Activated B cell treated with CpG ODN at 0.5 μM for 24 hours (primary cell): ENCODE measurements at regions of chr7 and their contacts with region 1.

Region 1: DNA sequence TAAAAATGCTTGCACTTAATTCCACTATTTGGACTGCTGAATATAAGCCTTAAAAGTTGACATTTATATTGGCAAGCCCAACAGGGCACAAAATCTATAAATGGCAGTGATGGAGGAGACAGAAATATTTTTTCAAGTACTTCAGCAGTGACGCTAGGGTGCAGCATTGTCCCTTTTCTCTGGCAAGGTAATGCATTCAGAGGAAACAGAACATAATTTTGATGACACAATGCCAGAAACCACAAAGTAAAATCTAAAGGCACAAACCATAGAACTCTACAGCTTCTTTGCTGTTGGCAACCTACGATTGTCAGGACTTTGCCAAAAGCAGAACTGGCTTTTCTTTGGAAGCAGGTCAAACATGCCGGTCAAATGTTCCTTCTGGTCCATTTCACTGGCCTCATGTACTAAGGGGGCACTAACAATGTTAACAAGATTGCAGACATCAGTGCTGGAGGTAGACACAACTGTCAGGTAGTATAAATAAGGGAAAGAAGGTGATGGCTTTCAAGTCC is 30.9 kb upstream of the FAM133B start:
- DNase-seq: no peak
- ATAC-seq: peak; percentile 78
- H3K4me3 Mint-ChIP-seq: peak overlapping the region; percentile 17
- H3K27ac Mint-ChIP-seq: peak overlapping the region; percentile 76
- H3K4me1 Mint-ChIP-seq: peaks cover 22% of the 10 kb centered on the region
- H3K27me3 Mint-ChIP-seq: no peaks in the 10 kb centered on the region
- CTCF ChIP-seq: no peak

Region 2: DNA sequence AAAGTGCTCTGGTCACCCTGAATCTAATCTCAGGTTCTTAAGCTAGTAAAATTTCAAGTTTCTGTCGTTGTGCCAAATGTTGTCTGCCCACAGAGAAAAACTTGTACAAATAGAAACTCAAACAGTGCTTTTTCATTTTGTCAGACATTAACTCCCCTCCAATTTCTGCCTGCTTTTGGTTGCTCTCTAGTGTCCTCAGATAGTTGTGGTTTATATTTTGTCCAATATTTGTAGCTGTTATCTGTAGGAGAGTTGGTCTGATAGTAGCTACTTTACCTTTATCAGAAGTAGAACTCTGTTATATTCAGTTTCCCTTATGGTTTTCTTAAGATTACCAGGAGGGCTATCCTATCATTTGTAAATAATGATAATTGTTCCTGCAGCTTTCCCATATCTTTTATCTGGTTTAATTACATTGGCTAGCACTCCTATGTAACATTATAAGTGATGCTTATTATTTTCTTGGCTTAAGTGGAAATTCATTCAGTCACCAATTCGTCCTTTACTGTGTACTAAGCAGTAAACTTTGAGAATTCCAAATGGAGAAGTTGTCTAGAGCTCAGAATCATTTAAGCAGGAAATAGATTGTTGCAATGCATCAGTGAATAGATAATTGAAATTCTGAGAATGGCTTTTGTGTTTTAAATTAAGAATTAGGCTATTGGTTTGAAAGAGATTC is 284.3 kb before region 1 on chr7:
- CTCF ChIA-PET with region 1: no interaction called
- POLR2A ChIA-PET with region 1: no interaction called
- intact Hi-C with region 1: no loop called
- DNase-seq: no peak
- ATAC-seq: no peak
- H3K4me3 Mint-ChIP-seq: no peak overlapping the region
- H3K27ac Mint-ChIP-seq: no peak overlapping the region
- H3K4me1 Mint-ChIP-seq: no peaks in the 10 kb centered on the region
- H3K27me3 Mint-ChIP-seq: no peaks in the 10 kb centered on the region
- CTCF ChIP-seq: no peak

Region 3: DNA sequence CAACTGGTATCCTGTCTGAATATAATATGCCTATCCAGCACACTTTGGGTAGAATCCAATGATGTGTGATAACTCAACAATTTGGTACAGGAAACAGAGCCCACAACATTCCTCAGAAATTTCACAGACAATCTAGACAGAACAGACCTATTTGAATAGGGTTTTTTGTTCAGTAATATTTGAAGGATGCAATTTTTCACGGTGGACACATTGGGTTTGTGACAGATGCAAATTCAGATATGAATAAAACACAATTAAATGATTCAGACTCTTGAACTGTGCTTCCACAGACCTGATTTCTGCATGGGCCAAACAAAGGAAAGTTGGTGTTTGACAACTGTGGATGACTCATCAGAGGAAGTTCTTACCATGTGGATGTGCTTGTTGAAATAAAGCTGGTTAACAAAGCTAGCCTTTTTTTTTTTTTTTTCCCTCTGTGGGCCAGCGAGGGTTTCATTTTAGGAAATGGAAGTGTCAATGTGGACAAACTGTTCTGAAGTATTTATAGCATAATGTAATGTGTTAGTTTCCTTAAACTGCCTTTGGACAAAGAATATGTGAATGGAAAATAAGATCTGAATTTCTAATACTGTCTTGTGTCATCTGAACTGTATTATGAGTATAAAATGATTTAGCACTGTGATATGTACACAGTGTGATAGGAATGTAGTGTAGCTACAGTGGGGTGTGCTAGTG is 12.3 kb after region 1 on chr7:
- CTCF ChIA-PET with region 1: interaction called, 4 read pairs
- POLR2A ChIA-PET with region 1: interaction called, 24 read pairs
- intact Hi-C with region 1: loop called (anchors 1 kb)
- DNase-seq: no peak
- ATAC-seq: peak; percentile 34
- H3K4me3 Mint-ChIP-seq: peak overlapping the region; percentile 48
- H3K27ac Mint-ChIP-seq: peak overlapping the region; percentile 70
- H3K4me1 Mint-ChIP-seq: peaks cover 46% of the 10 kb centered on the region
- H3K27me3 Mint-ChIP-seq: no peaks in the 10 kb centered on the region
- CTCF ChIP-seq: no peak

Region 4: GRCh38 chr7:92691578-92691977 is 70.5 kb after region 1 on chr7:
- CTCF ChIA-PET with region 1: no interaction called
- POLR2A ChIA-PET with region 1: interaction called, 4 read pairs
- intact Hi-C with region 1: loop called (anchors 1 kb)
- DNase-seq: no peak
- ATAC-seq: peak; percentile 61
- H3K4me3 Mint-ChIP-seq: no peak overlapping the region
- H3K27ac Mint-ChIP-seq: no peak overlapping the region
- H3K4me1 Mint-ChIP-seq: peaks cover 9% of the 10 kb centered on the region
- H3K27me3 Mint-ChIP-seq: no peaks in the 10 kb centered on the region
- CTCF ChIP-seq: no peak

Region 5: GRCh38 chr7:92868683-92869293 is 247.7 kb after region 1 on chr7:
- CTCF ChIA-PET with region 1: interaction called, 3 read pairs
- POLR2A ChIA-PET with region 1: no interaction called
- intact Hi-C with region 1: loop called (anchors 1 kb)
- DNase-seq: no peak
- ATAC-seq: no peak
- H3K4me3 Mint-ChIP-seq: no peak overlapping the region
- H3K27ac Mint-ChIP-seq: no peak overlapping the region
- H3K4me1 Mint-ChIP-seq: no peaks in the 10 kb centered on the region
- H3K27me3 Mint-ChIP-seq: peaks cover 1% of the 10 kb centered on the region
- CTCF ChIP-seq: no peak

Region 6: GRCh38 chr7:93055543-93056107 is 434.5 kb after region 1 on chr7:
- CTCF ChIA-PET with region 1: interaction called, 4 read pairs
- POLR2A ChIA-PET with region 1: no interaction called
- intact Hi-C with region 1: loop called (anchors 1 kb)
- DNase-seq: no peak
- ATAC-seq: peak; percentile 79
- H3K4me3 Mint-ChIP-seq: no peak overlapping the region
- H3K27ac Mint-ChIP-seq: no peak overlapping the region
- H3K4me1 Mint-ChIP-seq: peaks cover 6% of the 10 kb centered on the region
- H3K27me3 Mint-ChIP-seq: no peaks in the 10 kb centered on the region
- CTCF ChIP-seq: peak; percentile 74

Region 7: DNA sequence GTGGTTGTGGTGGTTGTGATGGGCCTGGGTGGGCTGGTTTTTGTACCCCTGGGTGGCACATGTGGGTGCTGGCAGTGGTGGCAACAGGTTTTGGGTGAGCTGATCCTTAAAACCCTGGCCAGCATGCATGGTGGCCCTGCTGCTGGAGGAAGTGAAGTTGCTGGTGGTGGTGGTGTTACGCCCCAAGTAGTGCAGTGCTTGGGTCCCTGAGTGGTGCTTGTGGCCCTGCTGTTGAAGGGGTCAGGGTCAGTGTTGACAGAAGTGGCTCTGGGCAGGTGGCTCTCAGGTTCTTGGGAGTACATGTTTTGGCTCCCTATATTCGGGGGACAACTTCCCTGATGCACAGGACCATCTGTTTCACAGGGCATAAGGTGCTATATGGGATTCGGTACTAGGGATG is 465.7 kb after region 1 on chr7:
- CTCF ChIA-PET with region 1: no interaction called
- POLR2A ChIA-PET with region 1: no interaction called
- intact Hi-C with region 1: no loop called
- DNase-seq: no peak
- ATAC-seq: no peak
- H3K4me3 Mint-ChIP-seq: no peak overlapping the region
- H3K27ac Mint-ChIP-seq: no peak overlapping the region
- H3K4me1 Mint-ChIP-seq: no peaks in the 10 kb centered on the region
- H3K27me3 Mint-ChIP-seq: peaks cover 13% of the 10 kb centered on the region
- CTCF ChIP-seq: no peak